Lower leg skin (tissue), 4 donors: ENCODE measurements at regions of chr9 and their contacts with region 1.

Region 1: GRCh38 chr9:133991913-133992779 is at the start of gene VAV2:
- DNase-seq: peak in 1 of 2 donors; percentile 90
- H3K4me3 ChIP-seq: peak within 1 kb of the TSS; percentile 53
- CTCF ChIP-seq: no peak
- POLR2A ChIP-seq: no peak
- total RNA-seq, gene VAV2: 6.8 to 9.1 (median 7.5) TPM

Region 2: GRCh38 chr9:133792721-133793470 is 199.2 kb before region 1 on chr9:
- intact Hi-C with region 1: loop called (anchors 2 kb)
- DNase-seq: peak; percentile 59 to 94
- H3K4me3 ChIP-seq: no peak overlapping the region
- CTCF ChIP-seq: peak in 1 of 3 donors; percentile 36
- POLR2A ChIP-seq: no peak

Region 3: DNA sequence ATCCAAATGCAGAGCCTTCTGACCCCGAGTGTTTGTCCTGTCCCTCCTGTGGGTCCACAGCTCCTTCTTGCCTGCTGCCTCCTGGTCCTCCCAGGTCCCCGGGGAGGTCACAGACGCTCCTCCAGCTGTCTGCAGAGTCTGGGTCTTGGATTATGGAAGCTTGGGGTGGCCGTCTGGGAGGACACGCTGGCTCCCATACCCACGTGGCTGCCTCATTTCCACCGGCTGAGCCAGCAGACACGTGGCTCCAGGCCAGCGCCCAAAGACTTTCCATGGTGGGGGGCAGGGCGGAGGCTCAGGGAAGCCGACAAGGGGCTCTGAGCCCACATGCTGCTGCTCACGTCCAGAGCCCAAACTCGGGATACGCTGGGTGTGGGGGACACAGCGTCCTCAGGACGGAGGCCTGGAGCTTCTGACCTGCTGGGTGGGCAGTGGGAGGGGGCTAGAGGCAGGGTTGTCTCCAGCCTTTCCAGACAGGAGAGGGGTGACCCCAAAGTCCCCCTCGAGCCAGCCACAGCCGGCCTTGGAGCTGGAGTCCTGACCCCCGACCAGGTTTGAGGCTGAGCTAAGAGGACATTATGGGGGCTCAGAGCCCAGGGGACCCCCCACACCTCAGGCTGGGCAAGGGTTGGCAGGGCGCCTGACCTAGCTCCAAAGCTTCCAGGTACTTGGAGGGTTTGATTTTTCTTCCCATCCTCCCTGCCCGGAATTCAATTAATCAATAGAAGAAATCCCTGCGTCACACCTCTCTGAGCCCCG is 196.4 kb after region 1 on chr9:
- intact Hi-C with region 1: no loop called
- DNase-seq: peak in 1 of 2 donors; percentile 83
- H3K4me3 ChIP-seq: no peak overlapping the region
- CTCF ChIP-seq: no peak
- POLR2A ChIP-seq: no peak